MCF 10A (cell line): ENCODE measurements at regions of chr1 and their contacts with region 1.

Region 1: DNA sequence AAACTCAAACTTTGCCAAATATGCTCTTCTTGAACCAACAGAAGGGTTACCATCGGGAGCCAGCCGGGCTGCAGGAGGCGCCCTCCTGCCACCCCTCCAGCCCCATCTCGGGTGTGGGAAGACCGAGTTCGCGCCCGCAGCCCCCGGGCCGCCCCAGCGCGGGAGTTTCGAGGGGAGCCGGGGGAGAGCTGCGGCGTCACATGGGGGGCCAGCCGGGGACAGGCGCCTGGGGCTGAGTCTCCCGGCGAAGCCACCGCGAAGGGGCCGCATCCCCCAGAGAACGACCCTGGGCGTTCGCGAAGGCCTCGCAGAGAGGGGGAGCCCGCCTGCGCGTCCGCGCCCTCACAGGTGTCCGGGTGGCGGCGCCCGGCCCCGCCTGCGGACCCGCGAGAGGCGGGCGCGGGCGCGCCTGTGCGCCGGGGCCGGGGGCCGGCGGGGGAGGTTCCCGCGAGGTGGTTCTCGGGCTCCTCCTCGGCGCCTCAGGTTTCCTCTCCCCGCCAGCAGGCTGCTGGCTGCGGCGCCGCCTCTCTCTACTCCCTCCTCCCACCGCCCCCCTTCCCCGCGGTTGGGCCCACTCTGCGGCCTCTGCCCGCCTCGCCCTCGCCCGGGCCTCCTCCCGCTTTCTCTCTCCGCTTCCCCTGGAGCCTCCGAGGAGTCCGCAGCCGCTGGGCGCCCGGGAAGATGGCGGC is at the start of gene RAVER2:
- DNase-seq: peak; percentile 79
- H3K4me3 Mint-ChIP-seq: peak within 1 kb of the TSS; percentile 80
- H3K27ac Mint-ChIP-seq: peak within 1 kb of the TSS; percentile 31
- H3K4me1 Mint-ChIP-seq: peaks cover 21% of the 10 kb centered on the region
- H3K27me3 Mint-ChIP-seq: no peaks in the 10 kb centered on the region
- CTCF ChIP-seq: peak; percentile 53
- total RNA-seq, gene RAVER2: 5.3 and 5.9 TPM in 2 replicates

Region 2: GRCh38 chr1:64686828-64687724 is 57.6 kb before region 1 on chr1:
- CTCF ChIA-PET with region 1: no interaction called
- POLR2A ChIA-PET with region 1: no interaction called
- intact Hi-C with region 1: loop called (anchors 1 kb)
- DNase-seq: peak; percentile 71
- H3K4me3 Mint-ChIP-seq: no peak overlapping the region
- H3K27ac Mint-ChIP-seq: no peak overlapping the region
- H3K4me1 Mint-ChIP-seq: peaks cover 19% of the 10 kb centered on the region
- H3K27me3 Mint-ChIP-seq: no peaks in the 10 kb centered on the region
- CTCF ChIP-seq: peak; percentile 57

Region 3: GRCh38 chr1:64766385-64766784 is 21.7 kb after region 1 on chr1:
- CTCF ChIA-PET with region 1: interaction called, 4 read pairs
- POLR2A ChIA-PET with region 1: interaction called, 46 read pairs
- intact Hi-C with region 1: no loop called
- DNase-seq: peak; percentile 44
- H3K4me3 Mint-ChIP-seq: no peak overlapping the region
- H3K27ac Mint-ChIP-seq: no peak overlapping the region
- H3K4me1 Mint-ChIP-seq: peaks cover 13% of the 10 kb centered on the region
- H3K27me3 Mint-ChIP-seq: no peaks in the 10 kb centered on the region
- CTCF ChIP-seq: no peak

Region 4: GRCh38 chr1:64933296-64934070 is 188.8 kb after region 1 on chr1:
- CTCF ChIA-PET with region 1: no interaction called
- POLR2A ChIA-PET with region 1: no interaction called
- intact Hi-C with region 1: no loop called
- DNase-seq: peak; percentile 75
- H3K4me3 Mint-ChIP-seq: peak overlapping the region; percentile 11
- H3K27ac Mint-ChIP-seq: peak overlapping the region; percentile 91
- H3K4me1 Mint-ChIP-seq: peaks cover 28% of the 10 kb centered on the region
- H3K27me3 Mint-ChIP-seq: no peaks in the 10 kb centered on the region
- CTCF ChIP-seq: no peak